Activated CD4-positive, alpha-beta T cell treated with anti-CD3 and anti-CD28 coated beads, Interleukin-2, amount 10 ng/mL, durations not matched to agents 24 days and 14 days (primary cell): ENCODE measurements at regions of chr22 and their contacts with region 1.

Region 1: GRCh38 chr22:20495861-20496681 is 476 bp upstream of the KLHL22 start:
- DNase-seq: peak; percentile 98
- H3K4me3 Mint-ChIP-seq: peak overlapping the region; percentile 96
- H3K27ac Mint-ChIP-seq: peak overlapping the region; percentile 90
- H3K4me1 Mint-ChIP-seq: peaks cover 25% of the 10 kb centered on the region
- H3K27me3 Mint-ChIP-seq: no peaks in the 10 kb centered on the region

Region 2: DNA sequence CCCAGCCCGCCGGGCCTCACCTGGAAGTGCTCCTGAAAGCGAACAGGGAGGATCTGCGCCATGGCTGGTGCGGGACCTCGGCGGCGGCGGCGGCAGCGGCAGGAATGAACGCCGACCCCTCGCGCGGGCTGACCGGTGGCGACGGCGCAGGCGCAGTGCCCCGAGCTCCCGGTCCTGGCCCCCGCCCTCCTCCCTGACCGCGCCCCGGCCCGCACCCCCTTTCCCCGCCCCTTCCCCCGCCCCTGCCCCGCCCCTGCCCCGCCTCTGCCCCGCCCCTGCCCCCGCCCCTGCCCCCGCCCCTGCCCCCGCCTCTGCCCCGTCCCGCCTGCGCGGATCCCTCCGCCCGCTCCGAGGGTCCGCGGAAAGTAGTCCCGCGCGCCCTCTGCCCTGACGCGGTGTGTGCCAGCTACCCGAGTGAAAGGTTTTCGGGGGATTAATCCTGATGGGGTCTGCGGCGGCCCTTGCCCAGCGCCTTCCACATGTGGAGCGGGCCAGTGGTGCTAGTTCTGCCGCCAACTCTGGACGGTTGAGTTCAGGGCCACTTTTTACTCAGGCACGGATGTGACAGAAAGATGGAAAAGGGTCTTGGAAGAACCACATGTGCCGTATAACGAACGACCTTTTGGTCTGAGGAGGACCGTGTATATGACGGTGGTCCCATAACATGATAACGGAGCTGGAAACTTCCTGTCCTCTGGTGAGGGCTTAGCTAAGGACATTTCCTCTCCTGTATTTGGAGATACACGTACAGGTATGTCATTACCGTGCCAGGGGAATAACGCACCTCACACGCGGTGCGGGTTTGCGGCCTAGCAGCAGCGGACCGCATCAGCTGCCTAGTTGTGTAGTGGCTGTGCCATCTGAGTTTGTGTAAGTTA is 1204.3 kb before region 1 on chr22 and contains the start of gene CLTCL1:
- intact Hi-C with region 1: no loop called
- DNase-seq: peak; percentile 92
- H3K4me3 Mint-ChIP-seq: peak within 1 kb of the TSS; percentile 92
- H3K27ac Mint-ChIP-seq: peak within 1 kb of the TSS; percentile 87
- H3K4me1 Mint-ChIP-seq: peaks cover 18% of the 10 kb centered on the region
- H3K27me3 Mint-ChIP-seq: peaks cover 47% of the 10 kb centered on the region
- total RNA-seq, gene CLTCL1: 0.43 and 1.3 TPM in 2 replicates

Region 3: GRCh38 chr22:20405931-20406685 is 90.0 kb before region 1 on chr22:
- intact Hi-C with region 1: no loop called
- DNase-seq: peak; percentile 57
- H3K4me3 Mint-ChIP-seq: no peak overlapping the region
- H3K27ac Mint-ChIP-seq: no peak overlapping the region
- H3K4me1 Mint-ChIP-seq: peaks cover 6% of the 10 kb centered on the region
- H3K27me3 Mint-ChIP-seq: no peaks in the 10 kb centered on the region

Region 4: GRCh38 chr22:20418211-20418788 is 77.8 kb before region 1 on chr22:
- intact Hi-C with region 1: loop called (anchors 1 kb)
- DNase-seq: peak; percentile 92
- H3K4me3 Mint-ChIP-seq: peak overlapping the region; percentile 60
- H3K27ac Mint-ChIP-seq: no peak overlapping the region
- H3K4me1 Mint-ChIP-seq: peaks cover 1% of the 10 kb centered on the region
- H3K27me3 Mint-ChIP-seq: peaks cover 19% of the 10 kb centered on the region

Region 5: DNA sequence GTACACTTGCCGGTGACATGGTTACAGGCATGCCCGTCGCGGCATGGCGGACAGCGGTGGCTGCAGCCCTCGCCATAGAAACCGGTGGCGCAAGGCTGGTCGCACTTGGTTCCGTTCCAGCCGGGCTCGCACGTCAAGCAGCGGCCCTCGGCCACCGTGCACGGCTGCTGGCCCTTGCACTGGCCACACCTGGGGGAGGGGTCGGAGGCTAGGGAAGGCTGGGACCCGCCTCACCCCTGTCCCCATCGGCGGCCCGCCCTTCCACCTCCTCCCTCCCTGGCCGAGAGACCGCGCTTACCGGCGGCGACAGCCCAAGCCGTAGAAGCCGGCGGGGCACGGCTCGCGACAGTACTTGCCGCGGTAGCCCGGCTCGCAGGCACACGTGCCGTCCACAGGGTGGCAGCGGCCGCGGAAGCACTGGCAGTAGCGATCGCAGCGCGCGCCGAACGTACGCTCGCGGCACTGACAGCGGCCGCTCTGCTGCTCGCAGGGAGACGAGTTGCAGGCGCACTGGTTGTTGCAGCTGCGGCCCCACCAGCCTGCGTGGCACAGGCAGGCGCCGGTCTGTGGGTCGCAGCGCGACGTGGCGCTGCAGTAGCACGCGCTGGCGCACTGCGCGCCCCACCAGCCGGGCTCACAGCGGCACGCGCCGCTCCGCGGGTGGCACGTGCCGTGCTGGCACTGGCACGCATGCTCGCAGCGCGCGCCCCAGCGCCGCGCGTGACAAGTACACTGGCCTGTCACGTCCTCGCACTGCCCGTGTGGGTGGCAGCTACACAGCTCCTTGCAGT is 65.2 kb before region 1 on chr22:
- intact Hi-C with region 1: loop called (anchors 5 kb)
- DNase-seq: peak; percentile 85
- H3K4me3 Mint-ChIP-seq: peak overlapping the region; percentile 70
- H3K27ac Mint-ChIP-seq: no peak overlapping the region
- H3K4me1 Mint-ChIP-seq: peaks cover 9% of the 10 kb centered on the region
- H3K27me3 Mint-ChIP-seq: peaks cover 74% of the 10 kb centered on the region

Region 6: DNA sequence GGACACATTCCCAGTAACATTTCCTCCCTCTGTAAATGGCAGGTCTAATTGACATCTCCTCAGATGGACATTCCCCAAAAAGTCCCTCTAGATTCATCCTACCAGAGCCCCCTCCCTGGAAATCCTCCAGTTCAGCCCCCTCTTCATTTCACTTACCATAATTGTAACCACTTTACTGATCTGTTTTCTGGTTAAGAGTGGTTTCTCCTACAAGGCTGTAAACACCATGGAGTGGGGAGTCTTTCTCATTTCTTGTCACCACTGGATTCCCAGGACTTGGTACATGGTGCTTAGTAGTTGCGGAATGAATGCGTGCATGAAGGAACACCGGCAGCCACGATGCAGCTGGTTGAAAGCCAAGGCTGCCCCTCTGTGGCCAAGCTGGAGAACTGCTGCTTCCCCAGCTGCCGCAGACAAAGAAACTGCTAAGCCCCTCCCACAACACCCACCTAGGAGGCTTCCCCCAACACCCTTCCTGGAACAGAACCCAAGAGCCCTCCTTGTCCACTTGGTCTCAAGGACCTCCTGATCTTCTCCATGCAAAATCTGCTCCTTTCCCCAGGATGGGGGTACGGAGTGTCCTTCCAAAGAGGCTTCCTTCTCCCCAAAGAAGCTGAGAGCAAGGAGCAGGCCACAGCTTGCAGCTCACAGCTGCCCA is 39.9 kb before region 1 on chr22:
- intact Hi-C with region 1: loop called (anchors 1 kb)
- DNase-seq: peak; percentile 92
- H3K4me3 Mint-ChIP-seq: no peak overlapping the region
- H3K27ac Mint-ChIP-seq: peak overlapping the region; percentile 68
- H3K4me1 Mint-ChIP-seq: peaks cover 15% of the 10 kb centered on the region
- H3K27me3 Mint-ChIP-seq: no peaks in the 10 kb centered on the region

Region 7: DNA sequence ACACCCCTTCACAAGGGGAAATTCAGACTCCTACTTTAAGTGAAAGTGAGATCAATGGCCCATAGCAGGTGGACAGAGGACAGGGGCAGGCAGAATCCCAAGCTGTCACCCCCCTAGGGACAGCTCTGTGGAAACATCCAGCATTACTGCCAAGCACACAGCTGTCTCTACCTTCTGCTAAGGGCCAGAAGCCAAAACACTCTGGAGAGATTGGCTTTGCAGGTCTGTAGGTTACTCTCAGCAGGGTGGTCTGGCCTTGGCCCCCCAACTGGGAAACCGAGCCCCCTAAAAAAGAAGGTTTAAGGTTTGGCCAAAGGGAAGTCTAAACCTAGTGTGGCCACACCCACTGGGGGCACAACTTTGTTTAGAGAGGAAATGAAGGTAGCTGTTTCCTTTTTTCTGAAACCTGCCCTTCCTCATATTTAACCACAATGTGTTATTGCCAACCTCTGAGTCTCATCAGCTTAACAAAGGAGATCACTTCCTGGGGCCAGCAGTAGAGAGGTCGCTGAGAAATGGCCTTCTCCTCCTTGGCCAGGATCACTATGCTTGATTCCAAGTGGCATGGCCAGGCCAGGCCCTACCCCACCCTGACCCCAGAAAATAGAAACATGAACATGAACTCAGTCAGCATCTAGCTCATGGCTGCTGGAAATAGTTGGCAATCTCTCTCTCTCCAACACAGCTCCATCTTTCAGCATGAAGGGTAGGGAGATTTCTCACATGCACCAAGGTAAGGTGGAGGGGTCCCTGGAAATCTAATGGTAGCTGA is 32.6 kb before region 1 on chr22:
- intact Hi-C with region 1: loop called (anchors 2 kb)
- DNase-seq: peak; percentile 75
- H3K4me3 Mint-ChIP-seq: peak overlapping the region; percentile 67
- H3K27ac Mint-ChIP-seq: peak overlapping the region; percentile 95
- H3K4me1 Mint-ChIP-seq: peaks cover 37% of the 10 kb centered on the region
- H3K27me3 Mint-ChIP-seq: no peaks in the 10 kb centered on the region

Region 8: GRCh38 chr22:20475115-20475436 is 21.0 kb before region 1 on chr22:
- intact Hi-C with region 1: loop called (anchors 2 kb)
- DNase-seq: no peak
- H3K4me3 Mint-ChIP-seq: no peak overlapping the region
- H3K27ac Mint-ChIP-seq: peak overlapping the region; percentile 64
- H3K4me1 Mint-ChIP-seq: peaks cover 20% of the 10 kb centered on the region
- H3K27me3 Mint-ChIP-seq: no peaks in the 10 kb centered on the region

Region 9: GRCh38 chr22:20507253-20508066 is 11.4 kb after region 1 on chr22 and contains the start of gene MED15:
- intact Hi-C with region 1: loop called (anchors 1 kb)
- DNase-seq: peak; percentile 97
- H3K4me3 Mint-ChIP-seq: peak within 1 kb of the TSS; percentile 96
- H3K27ac Mint-ChIP-seq: peak within 1 kb of the TSS; percentile 95
- H3K4me1 Mint-ChIP-seq: peaks cover 42% of the 10 kb centered on the region
- H3K27me3 Mint-ChIP-seq: no peaks in the 10 kb centered on the region
- total RNA-seq, gene MED15: 113 and 117 TPM in 2 replicates